ENCODE measurements at regions of chr20 and their contacts with region 1.

Region 1: GRCh38 chr20:33781133-33781532 is 30.0 kb upstream of the CHMP4B start:
- DNase-seq: no peak
- H3K4me3 ChIP-seq: no peak overlapping the region
- H3K27ac ChIP-seq: peak overlapping the region; percentile 98; the same call in 1 of the 2 replicates
- H3K4me1 ChIP-seq: peaks cover 48% of the 10 kb centered on the region
- H3K27me3 ChIP-seq: no peaks in the 10 kb centered on the region
- CTCF ChIP-seq: no peak

Region 2: GRCh38 chr20:33489495-33490022 is 291.6 kb before region 1 on chr20:
- CTCF ChIA-PET with region 1: no interaction called
- POLR2A ChIA-PET with region 1: no interaction called
- intact Hi-C with region 1: no loop called
- DNase-seq: peak; percentile 91 to 100
- H3K4me3 ChIP-seq: peak overlapping the region; percentile 55; the same call in 1 of the 2 replicates
- H3K27ac ChIP-seq: peak overlapping the region; percentile 90
- H3K4me1 ChIP-seq: peaks cover 18% of the 10 kb centered on the region
- H3K27me3 ChIP-seq: no peaks in the 10 kb centered on the region
- CTCF ChIP-seq: no peak

Region 3: GRCh38 chr20:33576432-33577125 is 204.6 kb before region 1 on chr20:
- CTCF ChIA-PET with region 1: no interaction called
- POLR2A ChIA-PET with region 1: no interaction called
- intact Hi-C with region 1: no loop called
- DNase-seq: no peak
- H3K4me3 ChIP-seq: no peak overlapping the region
- H3K27ac ChIP-seq: no peak overlapping the region
- H3K4me1 ChIP-seq: no peaks in the 10 kb centered on the region
- H3K27me3 ChIP-seq: no peaks in the 10 kb centered on the region
- CTCF ChIP-seq: no peak

Region 4: GRCh38 chr20:33697129-33697528 is 84.0 kb before region 1 on chr20:
- CTCF ChIA-PET with region 1: no interaction called
- POLR2A ChIA-PET with region 1: no interaction called
- intact Hi-C with region 1: no loop called
- DNase-seq: no peak
- H3K4me3 ChIP-seq: no peak overlapping the region
- H3K27ac ChIP-seq: no peak overlapping the region
- H3K4me1 ChIP-seq: no peaks in the 10 kb centered on the region
- H3K27me3 ChIP-seq: no peaks in the 10 kb centered on the region
- CTCF ChIP-seq: no peak

Region 5: GRCh38 chr20:33719989-33720709 is 61.0 kb before region 1 on chr20 and contains the start of gene PXMP4:
- CTCF ChIA-PET with region 1: no interaction called
- POLR2A ChIA-PET with region 1: interaction called, 19 read pairs
- intact Hi-C with region 1: no loop called
- DNase-seq: peak; percentile 88 to 91
- H3K4me3 ChIP-seq: peak within 1 kb of the TSS; percentile 68
- H3K27ac ChIP-seq: no peak within 1 kb of the TSS
- H3K4me1 ChIP-seq: peaks cover 32% of the 10 kb centered on the region
- H3K27me3 ChIP-seq: no peaks in the 10 kb centered on the region
- CTCF ChIP-seq: no peak
- total RNA-seq, gene PXMP4: 12.2 and 19.1 TPM in 2 replicates